CD8-positive, alpha-beta T cell (primary cell): ENCODE measurements at regions of chr7 and their contacts with region 1.

Region 1: GRCh38 chr7:131057015-131057793 is 270.5 kb upstream of the MKLN1 start:
- DNase-seq: peak in 2 of 9 experiments; percentile 68 to 84
- ATAC-seq: peak; percentile 44
- H3K4me3 ChIP-seq: peak overlapping the region in 1 of 2 experiments; percentile 18
- H3K4me3 Mint-ChIP-seq: peak overlapping the region; percentile 77
- H3K27ac ChIP-seq: peak overlapping the region; percentile 66 to 82
- H3K27ac Mint-ChIP-seq: peak overlapping the region; percentile 96
- H3K4me1 ChIP-seq: peaks cover 73% of the 10 kb centered on the region
- H3K4me1 Mint-ChIP-seq: peaks cover 78% of the 10 kb centered on the region
- H3K27me3 ChIP-seq: no peaks in the 10 kb centered on the region
- H3K27me3 Mint-ChIP-seq: no peaks in the 10 kb centered on the region
- CTCF ChIP-seq: no peak

Region 2: GRCh38 chr7:131040467-131040932 is 16.7 kb before region 1 on chr7:
- CTCF ChIA-PET with region 1: interaction called, 13 read pairs
- POLR2A ChIA-PET with region 1: interaction called, 3 read pairs
- intact Hi-C with region 1: loop called in 1 of 2 experiments (anchors 2 kb)
- DNase-seq: peak in 3 of 9 experiments; percentile 49 to 81 (median 73)
- ATAC-seq: peak; percentile 54
- H3K4me3 ChIP-seq: no peak overlapping the region
- H3K4me3 Mint-ChIP-seq: peak overlapping the region; percentile 27
- H3K27ac ChIP-seq: peak overlapping the region in 1 of 2 experiments; percentile 3
- H3K27ac Mint-ChIP-seq: peak overlapping the region; percentile 24
- H3K4me1 ChIP-seq: peaks cover 46% of the 10 kb centered on the region
- H3K4me1 Mint-ChIP-seq: peaks cover 68% of the 10 kb centered on the region
- H3K27me3 ChIP-seq: no peaks in the 10 kb centered on the region
- H3K27me3 Mint-ChIP-seq: no peaks in the 10 kb centered on the region
- CTCF ChIP-seq: peak; percentile 94

Region 3: DNA sequence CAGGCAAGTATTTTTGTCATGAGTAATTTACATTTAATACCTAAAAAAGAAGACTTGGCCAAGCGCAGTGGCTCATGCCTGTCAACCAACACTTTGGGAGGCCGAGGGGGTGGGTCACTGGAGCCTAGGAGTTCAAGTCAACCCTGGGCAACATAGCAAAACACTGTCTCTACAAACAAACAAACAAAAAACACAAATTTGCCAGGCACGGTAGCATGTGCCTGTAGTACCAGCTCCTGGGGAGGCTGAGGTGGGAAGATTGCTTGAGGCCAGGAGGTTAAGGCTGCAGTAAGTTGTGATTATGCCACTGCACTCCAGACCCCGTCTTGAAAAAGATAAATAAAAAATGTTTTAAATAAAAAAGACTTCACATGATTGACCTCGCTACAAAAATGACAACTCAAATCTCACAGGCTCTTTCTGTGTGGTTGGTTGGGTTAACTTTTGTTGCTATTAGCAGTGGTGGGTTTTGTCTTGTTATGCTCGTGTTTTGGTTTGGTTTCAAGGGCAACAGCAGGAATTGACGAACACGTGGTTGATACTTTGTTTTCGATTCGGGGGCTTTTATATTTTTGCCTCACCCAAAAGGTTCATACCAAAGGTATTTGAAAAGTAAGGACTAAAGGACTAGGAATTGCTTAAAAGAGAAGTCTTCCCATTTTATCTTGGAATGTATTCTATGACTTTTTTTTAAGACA is 43.3 kb after region 1 on chr7:
- CTCF ChIA-PET with region 1: no interaction called
- POLR2A ChIA-PET with region 1: interaction called, 24 read pairs
- intact Hi-C with region 1: loop called (anchors 5 to 10 kb)
- DNase-seq: peak in 5 of 9 experiments; percentile 22 to 89 (median 40)
- ATAC-seq: peak; percentile 41
- H3K4me3 ChIP-seq: peak overlapping the region in 1 of 2 experiments; percentile 0
- H3K4me3 Mint-ChIP-seq: peak overlapping the region; percentile 71
- H3K27ac ChIP-seq: peak overlapping the region; percentile 60 to 80
- H3K27ac Mint-ChIP-seq: peak overlapping the region; percentile 85
- H3K4me1 ChIP-seq: peaks cover 92% of the 10 kb centered on the region
- H3K4me1 Mint-ChIP-seq: peaks cover 91% of the 10 kb centered on the region
- H3K27me3 ChIP-seq: no peaks in the 10 kb centered on the region
- H3K27me3 Mint-ChIP-seq: no peaks in the 10 kb centered on the region
- CTCF ChIP-seq: no peak